Activated T-helper 2 cell treated with anti-CD3 and anti-CD28 coated beads, Interferon-gamma antibody, Interleukin-2, Interleukin-4, amounts not matched to agents 10 μg/mL and 5 μg/mL and 100 μg/mL, durations not matched to agents 14 hours and 24 hours and 36 hours (primary cell): ENCODE measurements at regions of chr17 and their contacts with region 1.

Region 1: GRCh38 chr17:17890773-17891759 is 54.3 kb upstream of the SREBF1 start:
- DNase-seq: peak; percentile 26
- H3K4me3 Mint-ChIP-seq: no peak overlapping the region
- H3K27ac Mint-ChIP-seq: no peak overlapping the region
- H3K4me1 Mint-ChIP-seq: no peaks in the 10 kb centered on the region
- H3K27me3 Mint-ChIP-seq: no peaks in the 10 kb centered on the region

Region 2: GRCh38 chr17:17919169-17920107 is 28.4 kb after region 1 on chr17:
- intact Hi-C with region 1: no loop called
- DNase-seq: peak; percentile 34
- H3K4me3 Mint-ChIP-seq: no peak overlapping the region
- H3K27ac Mint-ChIP-seq: no peak overlapping the region
- H3K4me1 Mint-ChIP-seq: peaks cover 5% of the 10 kb centered on the region
- H3K27me3 Mint-ChIP-seq: no peaks in the 10 kb centered on the region

Region 3: GRCh38 chr17:18033442-18034099 is 142.5 kb after region 1 on chr17:
- intact Hi-C with region 1: loop called (anchors 1 kb)
- DNase-seq: peak; percentile 35
- H3K4me3 Mint-ChIP-seq: no peak overlapping the region
- H3K27ac Mint-ChIP-seq: no peak overlapping the region
- H3K4me1 Mint-ChIP-seq: peaks cover 28% of the 10 kb centered on the region
- H3K27me3 Mint-ChIP-seq: no peaks in the 10 kb centered on the region